Activated T-helper 2 cell treated with anti-CD3 and anti-CD28 coated beads, Interferon-gamma antibody, Interleukin-2, Interleukin-4, amounts not matched to agents 10 μg/mL and 5 μg/mL and 100 μg/mL, durations not matched to agents 14 hours and 24 hours and 36 hours (primary cell): ENCODE measurements at regions of chr14 and their contacts with region 1.

Region 1: DNA sequence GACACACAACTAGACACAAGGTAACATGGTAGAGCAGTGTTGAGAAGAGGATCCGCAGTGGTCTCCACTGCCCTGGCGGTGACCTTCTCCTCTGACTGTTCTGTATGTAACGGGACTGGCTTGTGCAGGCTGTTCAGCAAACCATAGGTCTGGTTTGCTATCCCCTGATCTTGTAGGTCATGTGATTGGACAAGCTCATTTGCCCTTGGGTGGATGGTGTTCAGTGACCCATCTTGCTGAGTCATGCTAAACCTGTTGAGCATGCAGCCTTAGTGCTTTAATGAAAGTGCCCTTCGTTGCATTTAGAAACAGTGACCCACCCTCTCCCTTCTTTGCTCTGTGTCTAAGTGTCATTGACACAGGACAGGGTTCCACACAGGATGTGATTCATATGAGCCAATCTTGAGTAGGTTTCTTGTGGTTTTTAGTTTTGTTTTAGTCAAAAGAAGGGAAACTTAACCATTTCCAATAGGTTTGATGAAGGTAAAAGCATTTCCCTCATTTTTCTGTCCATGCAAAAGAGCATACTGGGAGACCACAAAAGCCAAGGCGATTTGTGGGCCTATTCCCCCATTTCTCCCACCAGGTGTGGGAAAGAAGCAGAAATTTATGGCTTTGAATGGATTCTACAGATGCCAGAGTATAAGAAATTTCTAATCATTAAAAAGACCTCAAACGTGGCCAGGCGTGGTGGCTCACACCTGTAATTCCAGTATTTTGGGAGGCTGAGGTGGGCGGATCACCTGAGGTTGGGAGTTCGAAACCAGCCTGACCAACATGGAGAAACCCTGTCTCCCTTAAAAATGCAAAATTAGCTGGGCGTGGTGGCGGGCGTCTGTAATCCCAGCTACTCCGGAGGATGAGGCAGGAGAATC is 32.6 kb upstream of the HIF1A start:
- DNase-seq: peak; percentile 70
- H3K4me3 Mint-ChIP-seq: peak overlapping the region; percentile 73
- H3K27ac Mint-ChIP-seq: peak overlapping the region; percentile 96
- H3K4me1 Mint-ChIP-seq: peaks cover 63% of the 10 kb centered on the region
- H3K27me3 Mint-ChIP-seq: no peaks in the 10 kb centered on the region

Region 2: GRCh38 chr14:61342486-61342885 is 320.2 kb before region 1 on chr14:
- intact Hi-C with region 1: loop called (anchors 5 kb)
- DNase-seq: peak; percentile 83
- H3K4me3 Mint-ChIP-seq: peak overlapping the region; percentile 70
- H3K27ac Mint-ChIP-seq: peak overlapping the region; percentile 97
- H3K4me1 Mint-ChIP-seq: peaks cover 82% of the 10 kb centered on the region
- H3K27me3 Mint-ChIP-seq: no peaks in the 10 kb centered on the region

Region 3: GRCh38 chr14:61452452-61452851 is 210.2 kb before region 1 on chr14:
- intact Hi-C with region 1: loop called (anchors 2 kb)
- DNase-seq: peak; percentile 71
- H3K4me3 Mint-ChIP-seq: peak overlapping the region; percentile 54
- H3K27ac Mint-ChIP-seq: peak overlapping the region; percentile 99
- H3K4me1 Mint-ChIP-seq: peaks cover 88% of the 10 kb centered on the region
- H3K27me3 Mint-ChIP-seq: no peaks in the 10 kb centered on the region

Region 4: GRCh38 chr14:61503167-61503801 is 159.4 kb before region 1 on chr14:
- intact Hi-C with region 1: loop called (anchors 1 kb)
- DNase-seq: peak; percentile 24
- H3K4me3 Mint-ChIP-seq: peak overlapping the region; percentile 76
- H3K27ac Mint-ChIP-seq: peak overlapping the region; percentile 95
- H3K4me1 Mint-ChIP-seq: peaks cover 72% of the 10 kb centered on the region
- H3K27me3 Mint-ChIP-seq: no peaks in the 10 kb centered on the region

Region 5: DNA sequence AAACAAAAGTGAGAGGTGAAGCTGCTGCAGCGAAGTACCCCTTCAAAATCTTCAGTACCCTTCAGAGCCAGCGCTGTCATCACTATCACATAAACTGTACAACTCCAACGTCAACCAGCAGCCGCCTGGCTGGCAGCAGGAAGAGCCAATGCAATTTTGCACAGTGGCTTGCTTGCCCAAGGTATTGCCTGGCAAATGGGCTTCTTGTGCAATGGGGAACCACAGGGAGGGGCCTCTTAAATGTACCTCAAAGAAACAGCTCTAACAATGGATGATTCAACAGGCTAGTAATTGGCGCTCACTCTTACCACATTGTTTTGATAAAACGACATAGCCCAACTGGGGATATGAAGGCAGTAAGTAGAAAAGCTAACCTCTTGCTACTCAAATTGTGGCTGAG is 92.9 kb before region 1 on chr14:
- intact Hi-C with region 1: loop called (anchors 2 kb)
- DNase-seq: peak; percentile 24
- H3K4me3 Mint-ChIP-seq: peak overlapping the region; percentile 19
- H3K27ac Mint-ChIP-seq: peak overlapping the region; percentile 60
- H3K4me1 Mint-ChIP-seq: peaks cover 40% of the 10 kb centered on the region
- H3K27me3 Mint-ChIP-seq: peaks cover 46% of the 10 kb centered on the region

Region 6: DNA sequence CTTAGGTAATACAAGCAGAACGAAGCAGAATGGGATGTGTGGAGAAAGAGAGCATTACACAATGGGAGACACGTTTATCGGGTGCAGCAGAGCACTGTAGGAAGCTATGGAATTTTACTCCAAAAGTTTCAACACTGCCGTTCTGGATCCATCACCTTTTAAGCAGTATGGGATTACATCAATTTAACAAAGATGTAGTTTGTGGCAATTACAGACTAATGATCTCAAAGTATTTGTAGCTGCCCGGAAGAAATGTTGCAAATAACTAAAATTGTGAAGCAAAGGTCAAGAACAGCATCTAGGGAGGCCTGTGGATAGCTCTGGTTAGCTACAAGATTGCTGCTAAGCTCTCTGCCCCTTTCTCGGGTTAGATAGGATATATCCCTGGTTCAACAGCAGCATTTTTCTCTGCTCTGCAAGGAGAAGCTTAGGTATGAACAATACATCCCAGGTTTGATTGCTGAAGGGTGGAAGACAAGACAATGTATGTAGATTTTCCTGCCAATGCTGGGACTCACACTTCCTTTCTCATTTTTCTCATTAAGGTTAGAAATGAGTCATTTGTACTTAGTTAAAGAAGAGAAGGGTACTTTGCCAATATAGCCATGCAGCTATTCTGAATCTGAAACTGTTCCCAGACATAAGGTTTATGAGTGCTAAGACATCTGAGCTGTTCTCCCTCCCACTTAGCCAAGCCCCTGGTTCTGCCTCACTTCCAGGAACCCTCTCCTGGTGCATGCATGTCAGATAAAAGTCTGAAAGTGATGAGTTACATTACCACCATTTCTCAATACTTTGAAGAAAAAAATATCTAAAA is 42.3 kb before region 1 on chr14:
- intact Hi-C with region 1: loop called (anchors 1 kb)
- DNase-seq: no peak
- H3K4me3 Mint-ChIP-seq: no peak overlapping the region
- H3K27ac Mint-ChIP-seq: no peak overlapping the region
- H3K4me1 Mint-ChIP-seq: peaks cover 51% of the 10 kb centered on the region
- H3K27me3 Mint-ChIP-seq: no peaks in the 10 kb centered on the region

Region 7: DNA sequence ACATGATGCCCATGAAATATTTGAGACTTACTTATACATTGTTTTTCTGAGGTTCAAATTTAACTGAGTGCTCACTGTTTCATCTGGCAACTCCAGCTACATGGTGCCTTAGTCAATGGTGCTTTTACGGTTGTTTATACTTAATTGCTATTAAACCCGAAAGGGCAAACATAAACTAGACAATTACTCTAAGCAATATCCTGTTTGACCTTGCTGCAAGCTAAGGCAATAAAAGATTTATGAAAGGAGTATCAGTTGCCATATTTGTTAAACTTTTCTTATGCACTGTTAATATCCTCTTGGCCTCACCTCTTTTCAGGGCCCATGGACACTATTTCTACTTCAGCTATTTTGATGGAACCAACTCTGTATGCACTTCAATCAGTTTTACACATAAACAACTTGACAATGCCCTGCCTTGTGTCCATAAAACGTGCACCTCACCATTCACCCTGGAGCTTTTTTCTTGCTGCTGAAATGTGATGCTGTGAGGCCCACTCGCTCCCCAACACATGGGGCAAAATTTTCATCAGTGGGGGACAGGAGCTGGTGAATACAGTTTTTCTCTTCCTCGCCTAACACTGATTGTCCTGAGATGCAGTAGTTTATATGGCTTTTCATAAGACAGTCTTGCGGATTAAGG is 31.5 kb before region 1 on chr14:
- intact Hi-C with region 1: no loop called
- DNase-seq: no peak
- H3K4me3 Mint-ChIP-seq: no peak overlapping the region
- H3K27ac Mint-ChIP-seq: no peak overlapping the region
- H3K4me1 Mint-ChIP-seq: peaks cover 5% of the 10 kb centered on the region
- H3K27me3 Mint-ChIP-seq: no peaks in the 10 kb centered on the region

Region 8: GRCh38 chr14:61803755-61804154 is 141.1 kb after region 1 on chr14:
- intact Hi-C with region 1: no loop called
- DNase-seq: no peak
- H3K4me3 Mint-ChIP-seq: no peak overlapping the region
- H3K27ac Mint-ChIP-seq: no peak overlapping the region
- H3K4me1 Mint-ChIP-seq: peaks cover 5% of the 10 kb centered on the region
- H3K27me3 Mint-ChIP-seq: peaks cover 12% of the 10 kb centered on the region

Region 9: DNA sequence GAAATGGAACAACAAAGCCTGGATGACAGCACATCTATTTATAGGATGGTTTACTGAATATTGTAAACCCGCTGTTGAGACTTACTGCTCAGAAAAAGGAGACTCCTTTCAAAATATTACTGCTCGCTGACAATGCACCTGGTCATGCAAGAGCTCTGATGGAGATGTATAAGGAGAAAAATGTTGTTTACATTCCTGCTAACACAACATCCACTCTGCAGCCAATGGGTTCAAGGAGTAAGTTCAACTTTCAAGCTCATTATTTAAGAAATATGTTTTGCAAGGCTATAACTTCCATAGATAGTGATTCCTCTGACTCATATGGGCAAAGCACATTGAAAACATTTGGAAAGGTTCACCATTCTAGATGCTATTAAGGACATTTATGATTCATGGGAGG is 301.2 kb after region 1 on chr14:
- intact Hi-C with region 1: no loop called
- DNase-seq: no peak
- H3K4me3 Mint-ChIP-seq: no peak overlapping the region
- H3K27ac Mint-ChIP-seq: no peak overlapping the region
- H3K4me1 Mint-ChIP-seq: no peaks in the 10 kb centered on the region
- H3K27me3 Mint-ChIP-seq: peaks cover 2% of the 10 kb centered on the region